HEK293T (cell line): ENCODE measurements at regions of chr1 and their contacts with region 1.

Region 1: GRCh38 chr1:235199441-235199840 is 38.4 kb upstream of the RBM34 start:
- DNase-seq: peak; percentile 63

Region 2: DNA sequence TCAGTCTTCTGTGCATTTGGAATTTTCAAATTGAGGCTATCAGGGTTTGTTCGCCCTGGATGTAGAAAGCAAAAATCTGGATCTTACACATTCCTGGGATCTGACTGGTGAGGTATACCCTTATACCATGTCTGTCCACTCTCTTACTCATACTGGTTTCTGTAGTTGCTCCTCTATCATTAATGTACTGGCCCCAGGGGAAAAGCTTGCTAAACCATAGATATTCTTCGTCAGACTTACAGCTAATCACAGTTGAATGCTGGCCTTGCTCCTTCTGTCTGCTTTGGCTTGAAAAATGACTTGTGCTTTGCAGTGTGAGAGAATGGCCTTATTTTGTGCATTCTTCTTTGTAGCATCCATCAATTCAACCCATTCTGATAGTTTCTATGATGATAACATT is 198.3 kb after region 1 on chr1:
- CTCF ChIA-PET with region 1: interaction called, 13 read pairs
- POLR2A ChIA-PET with region 1: no interaction called
- DNase-seq: no peak

Region 3: GRCh38 chr1:235415008-235415904 is 215.8 kb after region 1 on chr1:
- CTCF ChIA-PET with region 1: interaction called, 24 read pairs
- POLR2A ChIA-PET with region 1: no interaction called
- DNase-seq: peak; percentile 82